ENCODE measurements at regions of chr6 and their contacts with region 1.

Region 1: DNA sequence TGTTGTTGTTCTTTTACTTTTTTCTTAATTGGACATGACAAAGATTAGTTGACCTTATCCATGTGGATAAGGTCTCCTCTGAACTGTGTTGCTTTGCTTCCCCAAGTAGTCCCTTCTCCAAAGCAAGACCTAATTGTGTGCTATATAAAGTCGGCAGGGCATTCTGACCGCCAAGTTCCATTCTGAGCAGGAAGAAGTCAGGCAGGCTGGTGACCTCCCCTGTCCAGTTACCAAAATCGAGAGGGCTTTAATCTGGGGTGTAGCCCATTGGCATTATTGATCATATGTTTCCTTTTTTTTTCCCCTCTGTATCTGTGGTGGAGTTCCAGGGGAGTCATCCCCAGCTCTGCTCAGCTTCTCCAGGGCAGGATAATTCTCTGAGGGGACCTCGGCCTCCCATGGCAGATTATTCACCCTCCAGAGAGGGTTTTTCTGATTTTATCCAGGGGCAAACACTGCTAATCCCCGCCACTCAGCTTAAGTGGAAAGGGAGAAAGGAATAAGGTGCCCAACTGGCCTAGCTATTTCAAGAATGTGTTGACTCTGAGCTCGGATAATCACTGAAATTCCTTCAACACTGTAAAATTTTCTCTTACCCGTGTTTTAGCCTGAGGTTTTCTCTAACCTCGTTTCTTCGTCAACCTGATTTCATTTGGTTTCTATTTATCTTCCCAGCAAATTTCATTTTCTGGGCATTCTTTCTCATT is 71.8 kb upstream of the L3MBTL3 start:
- DNase-seq: no peak
- H3K4me3 ChIP-seq: no peak overlapping the region
- H3K27ac ChIP-seq: no peak overlapping the region
- H3K4me1 ChIP-seq: no peaks in the 10 kb centered on the region
- H3K27me3 ChIP-seq: no peaks in the 10 kb centered on the region
- CTCF ChIP-seq: no peak

Region 2: DNA sequence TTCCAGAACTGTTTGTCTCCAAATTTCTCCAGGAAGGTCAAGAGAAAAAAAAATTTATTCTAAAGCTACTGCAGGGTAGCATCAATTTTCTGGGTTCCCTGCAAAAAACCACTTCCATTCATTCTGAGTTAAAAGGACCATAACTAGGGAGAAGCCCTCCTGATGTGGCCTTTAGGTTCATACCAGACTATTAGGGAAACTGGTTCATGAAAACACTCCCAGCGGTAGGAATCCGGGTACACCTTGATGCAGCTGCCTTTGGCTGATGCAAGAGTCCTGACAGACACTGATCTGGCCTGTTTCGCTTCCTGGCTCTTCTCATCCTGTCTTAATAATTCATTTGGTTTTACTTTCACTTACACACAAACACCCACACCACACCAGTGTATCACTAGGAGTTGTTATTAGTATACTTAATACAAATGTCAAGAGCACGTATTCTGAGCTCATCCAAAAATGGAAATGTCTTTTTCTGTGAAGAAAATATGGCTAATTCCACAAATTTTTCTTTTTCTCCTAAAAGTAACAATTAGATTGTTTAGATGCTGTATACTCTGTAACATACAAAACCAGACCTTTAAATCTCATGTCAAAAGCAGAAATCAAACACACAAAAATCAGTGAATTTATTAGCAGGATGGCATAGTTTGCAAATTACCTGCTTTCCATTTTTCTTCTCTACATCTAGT is 198.2 kb before region 1 on chr6:
- CTCF ChIA-PET with region 1: no interaction called
- dilution Hi-C with region 1: no loop called
- in situ Hi-C with region 1: no loop called
- intact Hi-C with region 1: no loop called
- DNase-seq: peak; percentile 70
- H3K4me3 ChIP-seq: no peak overlapping the region
- H3K27ac ChIP-seq: peak overlapping the region; percentile 91
- H3K4me1 ChIP-seq: peaks cover 43% of the 10 kb centered on the region
- H3K27me3 ChIP-seq: no peaks in the 10 kb centered on the region
- CTCF ChIP-seq: peak in 1 of 2 donors; percentile 42

Region 3: GRCh38 chr6:129860908-129861665 is 85.5 kb before region 1 on chr6 and contains the start of gene TMEM244:
- CTCF ChIA-PET with region 1: interaction called, 17 read pairs
- dilution Hi-C with region 1: no loop called
- in situ Hi-C with region 1: no loop called
- intact Hi-C with region 1: no loop called
- DNase-seq: no peak
- H3K4me3 ChIP-seq: no peak within 1 kb of the TSS
- H3K27ac ChIP-seq: no peak within 1 kb of the TSS
- H3K4me1 ChIP-seq: peaks cover 17% of the 10 kb centered on the region
- H3K27me3 ChIP-seq: no peaks in the 10 kb centered on the region
- CTCF ChIP-seq: no peak
- total RNA-seq, gene TMEM244: not detected

Region 4: GRCh38 chr6:129929433-129929832 is 17.2 kb before region 1 on chr6:
- CTCF ChIA-PET with region 1: no interaction called
- dilution Hi-C with region 1: no loop called
- in situ Hi-C with region 1: no loop called
- intact Hi-C with region 1: no loop called
- DNase-seq: peak; percentile 72
- H3K4me3 ChIP-seq: no peak overlapping the region
- H3K27ac ChIP-seq: no peak overlapping the region
- H3K4me1 ChIP-seq: peaks cover 3% of the 10 kb centered on the region
- H3K27me3 ChIP-seq: no peaks in the 10 kb centered on the region
- CTCF ChIP-seq: no peak